ENCODE measurements at regions of chr4 and their contacts with region 1.

Region 1: DNA sequence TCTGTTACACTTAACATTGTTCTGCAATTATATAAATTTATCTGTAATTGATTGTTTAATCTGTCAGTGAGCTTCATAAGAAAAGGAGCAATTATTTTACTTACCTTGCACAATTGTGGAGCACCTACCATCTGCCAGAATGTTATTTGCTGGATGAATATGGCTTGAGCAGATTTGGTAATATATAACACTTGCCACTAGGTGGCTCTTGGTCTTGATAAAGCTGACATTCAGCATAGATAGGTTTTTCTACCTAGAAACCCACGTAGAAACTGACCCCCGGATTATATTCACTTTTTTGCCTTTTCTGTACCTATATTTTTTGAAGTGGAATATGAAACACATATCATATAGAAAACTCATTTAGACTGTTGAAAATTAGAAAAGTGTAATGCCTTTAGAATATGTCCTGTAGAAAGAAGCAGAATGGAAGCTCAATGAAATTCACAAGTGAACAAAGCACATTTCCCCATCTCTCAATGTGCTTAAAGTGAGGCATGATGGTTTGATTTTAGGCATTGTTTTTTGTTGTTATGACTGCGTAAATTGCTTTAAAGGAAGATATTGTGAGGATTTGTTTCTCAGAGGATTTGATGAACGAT is 9.5 kb downstream of the RBPJ start:
- DNase-seq: peak; percentile 37
- ATAC-seq: peak; percentile 71
- H3K4me3 Mint-ChIP-seq: no peak overlapping the region
- H3K27ac Mint-ChIP-seq: no peak overlapping the region
- H3K4me1 Mint-ChIP-seq: peaks cover 34% of the 10 kb centered on the region
- H3K27me3 Mint-ChIP-seq: no peaks in the 10 kb centered on the region

Region 2: GRCh38 chr4:26028793-26029567 is 301.3 kb before region 1 on chr4:
- CTCF ChIA-PET with region 1: interaction called, 40 read pairs
- POLR2A ChIA-PET with region 1: interaction called, 3 read pairs
- DNase-seq: peak; percentile 75
- ATAC-seq: peak; percentile 94
- H3K4me3 Mint-ChIP-seq: no peak overlapping the region
- H3K27ac Mint-ChIP-seq: no peak overlapping the region
- H3K4me1 Mint-ChIP-seq: peaks cover 2% of the 10 kb centered on the region
- H3K27me3 Mint-ChIP-seq: peaks cover 2% of the 10 kb centered on the region

Region 3: DNA sequence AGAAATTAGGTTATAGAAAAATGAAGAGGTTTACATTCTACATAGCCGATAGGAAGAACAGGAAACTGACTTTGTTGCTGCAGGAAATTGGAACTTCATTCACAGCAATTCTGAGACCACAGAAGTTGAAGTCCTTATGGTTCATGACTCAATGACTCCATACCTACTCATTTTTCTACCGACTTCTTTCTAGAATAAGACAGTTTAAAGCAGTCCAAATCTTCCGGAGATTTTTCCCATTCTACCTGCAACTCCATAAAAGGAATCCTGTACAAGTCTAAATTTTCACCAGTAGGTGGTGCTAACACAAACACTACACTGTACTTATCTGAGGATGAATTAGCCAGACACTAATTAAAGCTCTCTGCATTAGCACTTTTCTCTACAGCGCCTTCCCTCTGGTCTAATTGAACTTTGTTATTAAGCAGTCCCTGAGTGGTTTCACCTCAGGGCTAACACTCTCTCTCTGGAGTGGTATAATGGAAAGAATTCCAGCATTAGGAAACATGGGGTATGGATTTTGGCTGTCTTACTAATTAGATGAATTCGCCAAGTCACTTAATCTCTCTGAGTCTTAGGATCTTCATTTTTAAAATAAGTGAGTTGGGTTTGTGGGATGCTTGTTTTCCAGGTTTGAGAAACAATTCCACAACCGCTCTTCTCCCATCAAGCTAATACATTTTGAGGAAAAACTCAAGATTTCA is 248.3 kb before region 1 on chr4:
- CTCF ChIA-PET with region 1: interaction called, 18 read pairs
- POLR2A ChIA-PET with region 1: no interaction called
- DNase-seq: no peak
- ATAC-seq: peak; percentile 63
- H3K4me3 Mint-ChIP-seq: no peak overlapping the region
- H3K27ac Mint-ChIP-seq: peak overlapping the region; percentile 41
- H3K4me1 Mint-ChIP-seq: peaks cover 51% of the 10 kb centered on the region
- H3K27me3 Mint-ChIP-seq: no peaks in the 10 kb centered on the region

Region 4: GRCh38 chr4:26252349-26253025 is 77.8 kb before region 1 on chr4:
- CTCF ChIA-PET with region 1: no interaction called
- POLR2A ChIA-PET with region 1: no interaction called
- DNase-seq: no peak
- ATAC-seq: no peak
- H3K4me3 Mint-ChIP-seq: no peak overlapping the region
- H3K27ac Mint-ChIP-seq: no peak overlapping the region
- H3K4me1 Mint-ChIP-seq: peaks cover 3% of the 10 kb centered on the region
- H3K27me3 Mint-ChIP-seq: peaks cover 4% of the 10 kb centered on the region

Region 5: DNA sequence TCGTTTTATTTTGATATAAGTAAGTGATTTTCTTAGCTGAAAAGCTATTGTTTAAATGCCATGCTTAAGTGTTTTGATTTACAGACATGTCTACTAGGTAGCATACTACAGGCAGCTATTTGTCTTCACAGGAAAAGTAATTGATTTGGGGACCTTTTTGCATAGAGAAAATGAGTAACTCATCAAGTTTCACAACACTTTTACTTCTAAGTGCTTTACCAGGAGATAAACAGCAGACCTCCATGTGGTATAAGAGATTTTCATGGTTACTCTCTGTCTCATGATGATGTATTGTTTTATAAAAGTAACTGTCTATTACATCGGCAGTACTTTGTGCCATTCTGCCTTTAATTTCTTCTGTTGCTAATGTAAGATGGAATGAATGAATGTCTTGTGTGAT is 19.2 kb after region 1 on chr4:
- CTCF ChIA-PET with region 1: interaction called, 22 read pairs
- POLR2A ChIA-PET with region 1: no interaction called
- DNase-seq: no peak
- ATAC-seq: no peak
- H3K4me3 Mint-ChIP-seq: no peak overlapping the region
- H3K27ac Mint-ChIP-seq: no peak overlapping the region
- H3K4me1 Mint-ChIP-seq: peaks cover 13% of the 10 kb centered on the region
- H3K27me3 Mint-ChIP-seq: no peaks in the 10 kb centered on the region

Region 6: GRCh38 chr4:26362745-26363439 is 32.6 kb after region 1 on chr4:
- CTCF ChIA-PET with region 1: interaction called, 20 read pairs
- POLR2A ChIA-PET with region 1: no interaction called
- DNase-seq: peak; percentile 26
- ATAC-seq: peak; percentile 52
- H3K4me3 Mint-ChIP-seq: no peak overlapping the region
- H3K27ac Mint-ChIP-seq: no peak overlapping the region
- H3K4me1 Mint-ChIP-seq: peaks cover 46% of the 10 kb centered on the region
- H3K27me3 Mint-ChIP-seq: no peaks in the 10 kb centered on the region

Region 7: GRCh38 chr4:26397086-26397485 is 66.8 kb after region 1 on chr4:
- CTCF ChIA-PET with region 1: interaction called, 26 read pairs
- POLR2A ChIA-PET with region 1: no interaction called
- DNase-seq: no peak
- ATAC-seq: no peak
- H3K4me3 Mint-ChIP-seq: no peak overlapping the region
- H3K27ac Mint-ChIP-seq: no peak overlapping the region
- H3K4me1 Mint-ChIP-seq: peaks cover 11% of the 10 kb centered on the region
- H3K27me3 Mint-ChIP-seq: no peaks in the 10 kb centered on the region

Region 8: DNA sequence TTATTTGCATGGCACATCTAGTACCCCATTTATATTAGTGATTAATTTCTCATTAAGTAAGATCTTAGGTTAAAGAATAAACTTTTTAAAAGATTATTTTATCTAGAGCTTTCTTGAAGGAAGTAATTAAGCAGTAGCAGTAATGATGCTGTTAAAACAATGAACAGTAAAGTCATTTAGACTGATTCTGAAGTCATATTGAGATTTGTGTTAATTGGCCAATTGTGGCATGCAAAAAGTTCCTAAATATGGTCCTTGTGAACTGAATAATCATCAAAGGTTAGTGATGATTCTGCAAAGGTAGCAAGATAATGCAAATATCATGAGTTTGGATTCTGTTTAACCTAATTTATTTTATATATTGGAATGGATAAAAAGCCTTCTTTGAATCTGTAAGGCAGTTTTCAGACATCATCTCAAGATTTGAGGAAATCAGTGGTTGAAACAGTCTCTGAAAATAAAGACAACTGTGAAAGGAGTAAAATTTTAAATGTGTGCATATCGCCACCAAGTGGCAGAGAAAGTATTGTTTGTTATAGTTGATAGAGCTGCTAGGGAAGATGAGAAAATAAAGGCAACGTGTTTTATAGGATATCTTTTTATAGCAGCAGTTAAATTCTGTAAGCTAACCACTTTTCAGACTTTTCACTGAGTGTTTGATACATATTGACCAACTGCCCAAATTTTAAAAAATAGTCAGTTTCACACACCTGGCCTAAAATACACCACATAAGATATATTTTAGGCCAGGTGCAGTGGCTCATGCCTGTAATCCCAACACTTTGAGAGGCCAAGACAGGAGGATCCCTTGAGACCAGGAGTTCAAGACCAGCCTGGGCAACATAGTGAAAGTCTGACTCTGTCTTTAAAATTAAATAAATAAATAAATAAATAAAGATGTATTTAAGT is 80.4 kb after region 1 on chr4:
- CTCF ChIA-PET with region 1: interaction called, 204 read pairs
- POLR2A ChIA-PET with region 1: interaction called, 5 read pairs
- DNase-seq: peak; percentile 65
- ATAC-seq: peak; percentile 67
- H3K4me3 Mint-ChIP-seq: no peak overlapping the region
- H3K27ac Mint-ChIP-seq: no peak overlapping the region
- H3K4me1 Mint-ChIP-seq: peaks cover 5% of the 10 kb centered on the region
- H3K27me3 Mint-ChIP-seq: no peaks in the 10 kb centered on the region